BJ (cell line): ENCODE measurements at regions of chr1 and their contacts with region 1.

Region 1: DNA sequence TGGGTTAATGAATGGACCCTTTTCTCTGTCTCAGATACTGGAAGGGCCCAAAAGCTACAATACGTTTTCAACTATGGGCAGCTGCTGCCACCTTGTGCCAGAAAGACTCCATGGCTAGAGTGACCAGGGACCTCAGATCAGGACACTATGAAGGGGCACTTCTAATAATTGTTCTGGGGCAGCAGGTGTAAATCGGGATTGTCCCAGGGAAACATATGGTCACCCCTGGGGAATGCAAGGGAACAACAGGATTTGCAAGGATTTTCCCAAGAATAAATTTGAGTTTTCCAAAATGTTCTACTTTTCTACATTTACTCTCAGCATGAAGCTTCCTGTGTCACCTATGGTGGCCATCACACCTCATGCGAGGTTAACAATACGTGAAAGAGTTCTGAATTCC is 12.0 kb upstream of the FCAMR start:
- DNase-seq: no peak
- H3K4me3 ChIP-seq: no peak overlapping the region
- H3K27me3 ChIP-seq: peaks cover 7% of the 10 kb centered on the region
- CTCF ChIP-seq: peak; percentile 73

Region 2: DNA sequence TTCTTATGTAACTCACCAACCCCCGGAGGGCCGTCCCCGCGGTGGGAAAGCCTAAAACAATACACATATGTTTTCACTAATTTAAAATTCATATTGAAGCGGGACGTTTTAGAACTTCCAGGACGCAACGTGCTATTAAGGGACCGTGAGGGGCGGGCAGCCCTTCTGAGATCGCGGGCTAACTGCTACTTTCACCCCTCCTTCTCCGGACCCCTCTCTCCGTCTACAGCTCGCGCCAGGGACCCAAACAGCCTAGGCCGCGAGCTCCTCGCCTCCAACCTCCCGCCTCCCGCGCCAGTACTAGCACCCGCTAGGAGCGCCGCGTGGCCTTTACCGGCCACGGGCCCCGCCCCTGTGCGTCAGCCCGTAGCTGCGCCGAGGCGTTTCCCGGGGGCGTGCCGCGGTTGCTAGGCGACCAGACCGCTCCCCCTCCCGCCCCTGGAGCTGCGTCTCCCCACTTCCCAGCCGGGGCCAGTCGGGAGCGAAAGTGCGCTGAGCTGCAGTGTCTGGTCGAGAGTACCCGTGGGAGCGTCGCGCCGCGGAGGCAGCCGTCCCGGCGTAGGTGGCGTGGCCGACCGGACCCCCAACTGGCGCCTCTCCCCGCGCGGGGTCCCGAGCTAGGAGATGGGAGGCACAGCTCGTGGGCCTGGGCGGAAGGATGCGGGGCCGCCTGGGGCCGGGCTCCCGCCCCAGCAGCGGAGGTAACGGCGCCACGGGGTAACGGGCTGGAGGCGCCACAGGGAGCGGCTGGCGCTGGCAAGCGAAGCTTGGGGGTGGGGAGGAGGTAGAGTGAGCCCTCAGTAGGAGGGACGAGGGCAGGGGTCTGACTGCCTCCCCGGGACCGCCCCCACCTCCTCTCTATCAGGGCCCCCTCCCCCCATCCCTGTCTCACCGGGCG is 346.9 kb before region 1 on chr1 and contains the start of gene DYRK3:
- CTCF ChIA-PET with region 1: interaction called, 13 read pairs
- POLR2A ChIA-PET with region 1: no interaction called
- DNase-seq: peak; percentile 46
- H3K4me3 ChIP-seq: peak within 1 kb of the TSS; percentile 83
- H3K27me3 ChIP-seq: no peaks in the 10 kb centered on the region
- CTCF ChIP-seq: 0 out of 2 replicates have a peak, but pooled peaks have one; percentile 13
- polyA plus RNA-seq, gene DYRK3: 7.4 and 10.8 TPM in 2 replicates

Region 3: DNA sequence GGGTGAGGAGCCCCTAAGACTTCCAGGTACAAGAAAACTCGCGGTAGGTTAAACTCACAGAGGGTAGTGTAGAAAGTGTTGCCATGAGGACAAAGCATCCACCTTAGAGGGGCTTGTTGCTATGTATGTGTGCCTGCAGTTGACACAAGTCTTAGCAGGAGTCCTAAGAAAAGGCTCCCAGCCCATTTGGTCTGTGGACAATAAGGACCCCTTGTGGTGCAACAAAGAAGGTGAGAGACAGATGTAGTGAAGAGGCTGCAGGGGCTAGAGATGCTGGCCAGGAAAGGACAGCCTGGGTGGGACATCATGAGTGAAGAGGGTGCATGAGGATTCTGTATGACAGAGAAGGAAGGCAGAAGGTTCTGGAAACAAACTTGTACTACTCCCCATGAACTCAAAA is 173.6 kb before region 1 on chr1:
- CTCF ChIA-PET with region 1: interaction called, 16 read pairs
- POLR2A ChIA-PET with region 1: no interaction called
- DNase-seq: no peak
- H3K4me3 ChIP-seq: no peak overlapping the region
- H3K27me3 ChIP-seq: 0 out of 2 replicates have a peak, but pooled peaks cover 1% of the 10 kb centered on the region
- CTCF ChIP-seq: peak; percentile 49

Region 4: DNA sequence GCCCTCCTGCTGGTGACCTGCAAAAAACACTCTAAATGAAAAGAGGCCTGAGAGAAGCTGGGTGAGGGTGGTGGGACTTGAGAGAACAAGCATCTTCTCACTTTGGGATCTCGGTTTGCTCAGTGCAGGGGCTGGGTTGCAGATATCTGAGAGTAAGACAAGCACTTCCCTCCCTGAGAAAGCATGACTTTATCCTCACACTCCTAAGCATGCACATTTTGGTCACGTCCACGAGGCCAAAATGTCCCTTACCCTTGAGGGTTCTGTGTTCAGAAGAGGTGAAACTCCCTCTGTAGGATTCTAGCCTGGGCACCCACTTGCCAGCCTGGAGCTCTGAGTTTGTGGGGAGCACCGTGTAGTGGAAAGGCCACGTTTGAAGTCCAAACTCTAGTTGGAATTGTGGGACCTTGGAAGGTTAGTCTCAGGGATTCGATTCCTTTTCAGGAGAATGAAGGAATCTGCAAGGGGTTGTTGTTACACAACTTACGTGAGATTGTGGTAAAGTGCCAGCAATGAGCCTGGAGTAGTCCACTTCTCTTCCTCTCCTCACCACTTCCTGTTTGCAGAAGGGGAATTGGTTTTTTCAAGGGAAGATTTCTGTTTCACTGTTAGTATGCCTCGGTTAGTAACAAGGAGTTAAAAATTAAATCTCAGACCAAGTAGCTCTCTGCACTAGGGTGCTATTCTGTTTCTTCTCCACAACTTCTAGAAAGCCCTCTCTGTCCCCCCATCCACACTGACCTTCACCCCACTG is 14.9 kb before region 1 on chr1:
- CTCF ChIA-PET with region 1: interaction called, 70 read pairs
- POLR2A ChIA-PET with region 1: no interaction called
- DNase-seq: no peak
- H3K4me3 ChIP-seq: no peak overlapping the region
- H3K27me3 ChIP-seq: peaks cover 9% of the 10 kb centered on the region
- CTCF ChIP-seq: no peak

Region 5: GRCh38 chr1:207004981-207005830 is 23.0 kb after region 1 on chr1:
- CTCF ChIA-PET with region 1: interaction called, 38 read pairs
- POLR2A ChIA-PET with region 1: no interaction called
- DNase-seq: no peak
- H3K4me3 ChIP-seq: no peak overlapping the region
- H3K27me3 ChIP-seq: no peaks in the 10 kb centered on the region
- CTCF ChIP-seq: peak; percentile 78

Region 6: DNA sequence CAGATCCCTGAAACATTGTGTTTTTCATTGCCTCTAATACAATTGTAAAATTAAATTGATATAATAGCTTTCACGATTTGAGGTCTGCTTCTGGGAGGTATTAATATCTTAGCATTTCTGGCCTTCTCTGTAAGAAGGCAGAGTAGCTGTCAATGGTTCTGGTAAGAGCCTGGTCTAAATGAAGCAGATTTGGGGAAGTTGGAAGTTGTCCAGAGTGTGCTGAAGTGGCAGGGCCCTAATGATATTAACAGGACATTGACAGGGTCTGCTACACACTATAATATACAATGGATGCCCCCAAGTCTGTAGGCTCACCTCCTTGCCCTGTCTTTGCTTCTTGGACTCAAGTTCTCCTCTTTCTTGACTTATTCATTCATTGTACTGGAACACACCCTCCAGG is 221.3 kb after region 1 on chr1:
- CTCF ChIA-PET with region 1: no interaction called
- POLR2A ChIA-PET with region 1: no interaction called
- DNase-seq: no peak
- H3K4me3 ChIP-seq: no peak overlapping the region
- H3K27me3 ChIP-seq: no peaks in the 10 kb centered on the region
- CTCF ChIP-seq: no peak